ENCODE measurements at regions of chr6 and their contacts with region 1.

Region 1: GRCh38 chr6:20126789-20127653 is 85.2 kb downstream of the MBOAT1 start:
- DNase-seq: peak; percentile 51 to 76
- ATAC-seq: peak; percentile 74 to 96 (median 92)
- H3K4me3 ChIP-seq: no peak overlapping the region
- H3K27ac ChIP-seq: peak overlapping the region in 3 of 10 donors; percentile 8 to 36 (median 10)
- H3K4me1 ChIP-seq: peaks cover 0 to 26% (median 10%) of the 10 kb centered on the region in 9 donors
- H3K27me3 ChIP-seq: no peaks in the 10 kb centered on the region
- CTCF ChIP-seq: peak; percentile 81 to 97 (median 93)

Region 2: GRCh38 chr6:20173833-20174792 is 47.1 kb after region 1 on chr6:
- intact Hi-C with region 1: no loop called
- DNase-seq: no peak
- ATAC-seq: peak in 3 of 8 donors; percentile 21 to 40 (median 30)
- H3K4me3 ChIP-seq: no peak overlapping the region
- H3K27ac ChIP-seq: peak overlapping the region in 2 of 10 donors; percentile 29 to 60
- H3K4me1 ChIP-seq: peaks cover 0 to 49% (median 11%) of the 10 kb centered on the region in 9 donors
- H3K27me3 ChIP-seq: no peaks in the 10 kb centered on the region
- CTCF ChIP-seq: no peak

Region 3: GRCh38 chr6:20197251-20197650 is 70.2 kb after region 1 on chr6:
- intact Hi-C with region 1: loop called in 1 of 10 experiments (anchors 5 kb)
- DNase-seq: no peak
- ATAC-seq: no peak
- H3K4me3 ChIP-seq: no peak overlapping the region
- H3K27ac ChIP-seq: no peak overlapping the region
- H3K4me1 ChIP-seq: peaks cover 0 to 31% (median 16%) of the 10 kb centered on the region in 9 donors
- H3K27me3 ChIP-seq: no peaks in the 10 kb centered on the region
- CTCF ChIP-seq: no peak